HepG2 (cell line): ENCODE measurements at regions of chr7 and their contacts with region 1.

Region 1: DNA sequence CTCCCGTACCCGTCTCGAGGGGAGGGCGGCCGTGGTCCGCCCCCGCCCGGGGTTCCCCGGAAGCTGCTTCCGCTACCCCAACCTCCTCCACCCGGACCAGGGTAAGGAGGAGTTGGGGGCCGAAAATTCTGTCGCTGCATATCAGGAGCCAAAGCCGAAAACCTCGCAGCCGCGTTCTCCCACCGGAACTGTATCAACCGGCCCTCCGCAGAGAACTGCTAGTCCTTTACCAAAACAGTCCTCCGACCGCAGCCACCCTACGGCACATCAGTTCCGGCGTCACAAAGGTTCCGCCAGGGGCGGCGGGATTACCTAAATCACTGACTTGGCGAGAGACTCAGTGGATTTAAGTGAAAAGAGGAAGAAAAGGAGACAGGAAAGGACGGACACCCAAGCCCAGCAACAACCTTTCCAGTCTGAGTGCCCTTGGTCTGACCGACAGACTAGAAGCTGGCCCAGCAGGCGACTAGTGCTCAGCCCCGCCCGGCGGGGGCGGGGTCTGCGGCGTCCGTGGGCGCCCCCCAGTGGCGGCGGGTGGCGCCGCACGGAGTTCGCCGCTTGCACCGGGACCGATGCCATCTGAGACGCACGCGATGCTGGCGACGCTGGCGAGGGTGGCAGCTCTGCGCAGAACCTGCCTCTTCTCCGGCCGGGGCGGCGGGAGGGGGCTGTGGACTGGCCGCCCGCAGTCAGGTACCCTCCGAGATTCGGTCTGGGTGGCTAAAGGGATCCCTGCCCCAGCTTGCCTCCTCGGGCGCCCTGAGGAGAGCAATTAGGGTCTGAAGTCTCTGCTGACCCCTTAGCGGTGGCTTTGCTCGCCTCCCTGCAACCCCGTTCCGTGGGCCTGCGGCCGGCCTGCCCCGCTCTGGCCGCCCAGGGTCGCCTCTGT is at the starts of genes MPLKIP and SUGCT:
- DNase-seq: peak; percentile 74
- ATAC-seq: peak; percentile 89
- H3K4me3 ChIP-seq: peak within 1 kb of the TSS; percentile 73 to 86 (median 84)
- H3K27ac ChIP-seq: peak within 1 kb of the TSS; percentile 92
- H3K4me1 ChIP-seq: peaks cover 40% of the 10 kb centered on the region
- H3K27me3 ChIP-seq: no peaks in the 10 kb centered on the region; a peak in 1 of 5 replicates
- CTCF ChIP-seq: peak; percentile 74
- EP300 ChIP-seq: 0 out of 4 replicates have a peak, but pooled peaks of 1 of the 2 experiments have one; percentile 13
- POLR2A ChIP-seq: peak; percentile 74
- RAD21 ChIP-seq: no peak
- total RNA-seq, gene MPLKIP: 45.7 and 66.9 TPM in 2 replicates
- total RNA-seq, gene SUGCT: 22.2 and 23.6 TPM in 2 replicates

Region 2: DNA sequence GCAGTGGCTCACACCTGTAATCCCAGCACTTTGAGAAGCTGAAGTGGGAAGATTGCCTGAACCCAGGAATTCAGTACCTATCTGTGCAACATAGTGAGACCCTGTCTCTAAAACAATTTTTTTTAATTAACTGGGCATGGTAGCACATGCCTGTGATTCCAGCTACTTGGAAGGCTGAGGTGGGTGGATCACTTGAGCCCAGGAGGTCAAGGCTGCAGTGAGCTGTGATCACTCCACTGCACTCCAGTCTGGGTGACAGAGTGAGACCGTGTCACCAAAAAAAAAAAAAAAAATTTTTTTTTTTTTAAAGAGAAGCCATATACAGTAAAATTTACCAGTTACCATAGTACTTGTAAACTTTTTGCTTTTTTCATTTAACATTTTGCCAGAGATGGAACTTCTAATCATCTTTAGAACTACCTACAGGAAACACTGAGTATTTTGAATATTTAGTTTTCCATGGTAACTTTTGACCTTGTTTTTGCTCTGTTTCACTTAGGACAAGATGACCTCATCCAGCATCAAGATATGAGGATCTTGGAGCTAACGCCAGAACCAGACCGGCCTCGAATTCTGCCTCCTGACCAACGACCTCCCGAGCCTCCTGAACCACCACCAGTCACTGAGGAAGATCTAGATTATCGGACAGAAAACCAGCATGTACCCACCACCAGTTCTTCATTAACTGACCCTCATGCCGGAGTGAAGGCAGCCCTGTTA is 40.9 kb before region 1 on chr7:
- CTCF ChIA-PET with region 1: interaction called, 3 read pairs
- POLR2A ChIA-PET with region 1: interaction called, 12 read pairs
- in situ Hi-C with region 1: no loop called
- intact Hi-C with region 1: no loop called
- DNase-seq: no peak
- ATAC-seq: no peak
- H3K4me3 ChIP-seq: no peak overlapping the region
- H3K27ac ChIP-seq: no peak overlapping the region
- H3K4me1 ChIP-seq: peaks cover 54% of the 10 kb centered on the region
- H3K27me3 ChIP-seq: no peaks in the 10 kb centered on the region
- CTCF ChIP-seq: no peak
- EP300 ChIP-seq: no peak
- POLR2A ChIP-seq: no peak
- RAD21 ChIP-seq: no peak

Region 3: GRCh38 chr7:40099837-40100236 is 34.8 kb before region 1 on chr7:
- CTCF ChIA-PET with region 1: interaction called, 3 read pairs
- POLR2A ChIA-PET with region 1: interaction called, 12 read pairs
- in situ Hi-C with region 1: no loop called
- intact Hi-C with region 1: loop called (anchors 2 kb)
- DNase-seq: peak; percentile 22
- ATAC-seq: peak; percentile 68
- H3K4me3 ChIP-seq: no peak overlapping the region
- H3K27ac ChIP-seq: peak overlapping the region; percentile 12
- H3K4me1 ChIP-seq: peaks cover 50% of the 10 kb centered on the region
- H3K27me3 ChIP-seq: no peaks in the 10 kb centered on the region
- CTCF ChIP-seq: no peak
- EP300 ChIP-seq: no peak
- POLR2A ChIP-seq: no peak
- RAD21 ChIP-seq: no peak

Region 4: DNA sequence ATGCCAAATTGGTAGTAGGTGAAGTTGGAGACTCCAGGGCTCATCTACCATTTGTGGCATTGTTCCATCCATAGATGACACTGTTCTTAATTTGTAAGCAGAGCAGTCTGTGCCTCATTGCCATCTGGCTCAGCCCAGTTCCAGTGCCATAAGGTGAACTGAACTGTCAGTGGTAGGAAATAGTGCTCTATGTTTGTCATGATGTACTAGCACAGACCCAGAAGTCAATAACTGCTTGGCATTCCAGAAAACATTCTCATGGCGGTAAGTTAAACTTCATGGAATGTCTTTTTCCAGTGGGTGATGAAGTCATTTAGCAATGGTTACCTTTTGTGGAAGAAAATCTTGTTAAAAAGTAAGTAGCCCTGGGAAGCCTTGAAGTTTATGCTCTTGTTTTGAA is 302.8 kb after region 1 on chr7:
- CTCF ChIA-PET with region 1: no interaction called
- POLR2A ChIA-PET with region 1: no interaction called
- in situ Hi-C with region 1: no loop called
- intact Hi-C with region 1: no loop called
- DNase-seq: peak; percentile 56
- ATAC-seq: peak; percentile 86
- H3K4me3 ChIP-seq: no peak overlapping the region
- H3K27ac ChIP-seq: no peak overlapping the region
- H3K4me1 ChIP-seq: no peaks in the 10 kb centered on the region; the same call in 1 of the 2 replicates
- H3K27me3 ChIP-seq: no peaks in the 10 kb centered on the region
- CTCF ChIP-seq: no peak
- EP300 ChIP-seq: no peak; a peak in 1 of 4 replicates
- POLR2A ChIP-seq: no peak
- RAD21 ChIP-seq: no peak

Region 5: DNA sequence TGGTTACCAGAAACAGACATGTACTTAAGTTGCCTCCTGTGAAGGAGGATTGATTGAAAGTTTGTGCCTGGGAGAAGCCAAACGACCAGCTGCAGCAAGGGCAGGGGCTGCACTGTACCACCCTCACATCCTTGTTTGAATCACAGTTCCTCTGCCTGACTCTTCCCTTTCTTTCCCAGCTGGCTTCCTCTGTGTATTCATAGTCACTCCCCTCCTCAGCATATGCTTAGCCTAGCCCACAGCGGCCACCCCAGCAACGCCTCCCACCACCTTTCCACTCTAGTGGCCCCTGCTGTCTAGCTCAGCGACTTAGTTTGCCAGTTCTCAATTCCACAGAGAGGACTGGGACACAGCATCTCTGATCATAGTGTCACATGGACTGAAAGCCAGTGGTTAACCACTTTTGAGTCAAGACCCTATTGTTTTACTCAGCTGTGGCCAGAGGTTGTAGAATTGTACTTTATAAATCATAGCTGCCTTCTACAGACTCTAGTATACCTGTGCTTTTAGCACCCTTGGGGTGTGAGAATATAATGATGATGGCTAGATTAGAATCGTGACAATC is 643.2 kb after region 1 on chr7:
- CTCF ChIA-PET with region 1: no interaction called
- POLR2A ChIA-PET with region 1: no interaction called
- in situ Hi-C with region 1: no loop called
- intact Hi-C with region 1: no loop called
- DNase-seq: no peak
- ATAC-seq: no peak
- H3K4me3 ChIP-seq: no peak overlapping the region
- H3K27ac ChIP-seq: no peak overlapping the region
- H3K4me1 ChIP-seq: peaks cover 9% of the 10 kb centered on the region
- H3K27me3 ChIP-seq: no peaks in the 10 kb centered on the region
- CTCF ChIP-seq: no peak
- EP300 ChIP-seq: no peak
- POLR2A ChIP-seq: no peak
- RAD21 ChIP-seq: no peak